ENCODE measurements at regions of chr2 and their contacts with region 1.

Region 1: GRCh38 chr2:170815746-170816503 is 762 bp upstream of the GAD1 start:
- DNase-seq: peak; percentile 84
- CTCF ChIP-seq: peak; percentile 59

Region 2: GRCh38 chr2:170235860-170236679 is 579.9 kb before region 1 on chr2:
- in situ Hi-C with region 1: loop called (anchors 25 kb)
- DNase-seq: peak; percentile 50
- CTCF ChIP-seq: peak; percentile 62

Region 3: GRCh38 chr2:170386554-170386953 is 429.4 kb before region 1 on chr2:
- in situ Hi-C with region 1: loop called (anchors 10 kb)
- DNase-seq: no peak
- CTCF ChIP-seq: no peak

Region 4: DNA sequence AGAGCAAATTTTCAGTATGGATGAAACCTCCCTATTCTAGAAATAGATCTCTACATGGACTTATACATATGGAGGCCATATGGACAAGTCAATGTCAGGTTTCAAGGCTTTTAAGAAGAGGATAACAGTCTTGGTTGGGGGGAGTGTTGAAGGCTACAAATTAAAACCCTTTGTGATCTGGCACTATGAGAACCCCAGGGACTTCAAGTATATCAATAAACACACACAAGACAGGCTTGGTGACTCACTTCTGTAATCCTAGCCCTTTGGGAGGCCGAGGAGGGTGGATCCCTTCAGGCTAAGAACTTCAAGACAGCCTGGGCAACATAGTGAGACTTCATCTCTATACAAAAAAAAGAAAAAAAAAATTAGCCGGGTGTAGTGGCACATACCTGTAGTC is 228.0 kb before region 1 on chr2:
- in situ Hi-C with region 1: no loop called
- DNase-seq: no peak
- CTCF ChIP-seq: no peak

Region 5: GRCh38 chr2:170715062-170715931 is 100.6 kb before region 1 on chr2 and contains the start of gene SP5:
- in situ Hi-C with region 1: loop called (anchors 10 kb)
- DNase-seq: peak; percentile 65
- CTCF ChIP-seq: no peak

Region 6: DNA sequence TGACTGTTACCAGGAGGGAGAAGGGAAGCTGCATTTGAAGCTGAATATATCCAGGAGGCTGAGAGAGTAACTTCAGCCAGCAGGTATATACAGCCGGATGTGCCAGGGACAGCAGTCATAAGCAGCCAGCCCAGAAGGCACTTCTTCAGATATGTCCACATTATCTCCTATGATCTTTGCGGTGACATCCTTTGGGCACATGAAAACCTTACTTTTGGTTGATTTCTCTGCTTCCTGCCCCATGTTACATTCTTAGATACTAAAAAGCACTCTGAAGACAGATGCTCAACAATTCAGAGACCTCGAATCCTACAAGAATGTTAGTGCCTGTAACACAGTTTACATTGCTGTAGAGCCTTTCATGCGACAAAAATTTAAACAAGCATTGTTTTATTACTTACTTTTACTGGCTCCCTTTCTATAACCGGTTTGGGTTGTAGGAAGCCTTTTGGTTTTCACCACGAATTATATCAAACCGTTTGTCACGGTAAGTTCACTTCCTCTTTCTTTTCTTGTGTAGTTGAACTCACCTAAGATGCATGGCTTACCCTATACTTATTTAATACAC is 395.0 kb after region 1 on chr2:
- in situ Hi-C with region 1: no loop called
- DNase-seq: peak; percentile 45
- CTCF ChIP-seq: no peak

Region 7: GRCh38 chr2:172084734-172085459 is 1269.0 kb after region 1 on chr2:
- in situ Hi-C with region 1: loop called (anchors 10 kb)
- DNase-seq: peak; percentile 92
- CTCF ChIP-seq: no peak

Measured in GM13977 (cell line).